Vagina (tissue), 2 donors: ENCODE measurements at regions of chr9 and their contacts with region 1.

Region 1: DNA sequence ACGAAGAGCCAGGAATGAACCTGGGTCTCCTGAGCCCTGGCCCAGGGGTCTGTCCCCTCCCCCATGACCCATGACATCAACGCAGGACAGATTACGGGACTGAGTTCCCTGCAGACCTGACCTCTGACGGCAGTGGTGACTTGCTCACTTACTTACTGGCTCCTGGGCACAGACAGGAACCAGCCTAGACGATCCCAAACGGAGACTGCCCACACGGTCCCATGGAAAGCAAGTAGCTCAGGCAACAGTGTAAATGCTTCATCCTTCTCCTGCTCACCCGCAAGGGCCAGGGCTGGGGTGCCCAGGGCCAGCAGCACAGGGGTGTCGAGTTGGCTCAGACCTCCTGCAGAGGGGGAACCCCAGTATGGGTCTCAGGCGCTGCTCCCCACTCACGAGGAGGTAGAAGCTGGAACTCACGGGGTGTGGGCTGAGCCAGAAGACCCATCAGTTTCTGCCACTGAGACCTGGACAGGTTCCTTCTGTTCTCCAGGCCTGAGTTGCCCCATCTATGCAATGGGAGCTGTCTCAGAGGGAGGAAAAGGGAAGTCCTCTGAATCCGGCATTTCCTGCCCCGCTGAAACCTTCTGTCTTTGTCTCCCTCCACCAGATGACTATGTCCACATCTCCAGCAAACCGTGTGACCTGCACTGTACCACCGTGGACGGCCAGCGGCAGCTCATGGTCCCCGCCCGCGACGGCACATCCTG is 5.6 kb downstream of the ADAMTSL2 start:
- DNase-seq: no peak
- H3K4me3 ChIP-seq: peak overlapping the region; percentile 26 to 38
- H3K27ac ChIP-seq: no peak overlapping the region
- H3K4me1 ChIP-seq: peaks cover 25% of the 10 kb centered on the region
- H3K27me3 ChIP-seq: no peaks in the 10 kb centered on the region
- CTCF ChIP-seq: no peak
- POLR2A ChIP-seq: no peak

Region 2: GRCh38 chr9:133604214-133604613 is 64.1 kb after region 1 on chr9:
- intact Hi-C with region 1: no loop called
- DNase-seq: no peak
- H3K4me3 ChIP-seq: no peak overlapping the region
- H3K27ac ChIP-seq: no peak overlapping the region
- H3K4me1 ChIP-seq: no peaks in the 10 kb centered on the region
- H3K27me3 ChIP-seq: peaks cover 6% of the 10 kb centered on the region
- CTCF ChIP-seq: no peak
- POLR2A ChIP-seq: no peak

Region 3: DNA sequence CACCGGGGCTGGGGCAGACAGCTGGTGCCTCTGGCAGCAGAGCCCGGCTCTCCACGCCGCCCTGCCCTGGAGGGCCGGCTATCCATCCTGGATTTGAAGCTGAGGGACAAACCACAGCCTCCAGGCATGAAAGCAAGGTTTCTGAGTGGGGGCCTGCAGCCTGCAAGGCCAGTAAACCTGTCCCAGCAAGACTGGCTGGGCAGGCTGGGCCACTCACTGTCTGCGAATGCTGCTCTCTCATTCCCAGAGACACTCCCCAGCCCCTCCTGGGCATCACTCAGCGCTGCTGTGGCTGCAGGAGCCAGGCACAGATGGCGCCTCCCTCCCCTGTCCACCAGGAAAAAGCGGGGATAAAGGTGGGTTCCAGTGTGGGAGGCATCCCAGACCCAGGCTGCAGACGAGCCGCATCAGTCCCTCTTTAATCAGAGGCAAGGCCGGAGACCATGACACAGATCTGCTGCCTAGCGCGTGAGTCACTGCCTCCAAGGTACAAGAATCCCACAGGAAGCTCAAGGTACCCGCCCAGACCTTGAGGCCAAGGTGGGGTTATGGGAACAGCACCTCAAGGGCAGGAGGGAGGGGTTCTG is 334.0 kb after region 1 on chr9:
- intact Hi-C with region 1: loop called (anchors 5 kb)
- DNase-seq: no peak
- H3K4me3 ChIP-seq: no peak overlapping the region
- H3K27ac ChIP-seq: no peak overlapping the region
- H3K4me1 ChIP-seq: peaks cover 35% of the 10 kb centered on the region
- H3K27me3 ChIP-seq: no peaks in the 10 kb centered on the region
- CTCF ChIP-seq: no peak
- POLR2A ChIP-seq: no peak